HEK293 (cell line): ENCODE measurements at regions of chrX and their contacts with region 1.

Region 1: GRCh38 chrX:56978172-56978571 is 17.2 kb downstream of the SPIN3 start:
- H3K4me3 ChIP-seq: no peak overlapping the region
- H3K27ac ChIP-seq: no peak overlapping the region
- H3K4me1 ChIP-seq: no peaks in the 10 kb centered on the region
- CTCF ChIP-seq: peak; percentile 49; the same call in 1 of the 2 replicates

Region 2: GRCh38 chrX:56802921-56803849 is 175.0 kb before region 1 on chrX:
- CTCF ChIA-PET with region 1: interaction called, 10 read pairs
- POLR2A ChIA-PET with region 1: interaction called, 3 read pairs
- H3K4me3 ChIP-seq: peak overlapping the region; percentile 45
- H3K27ac ChIP-seq: peak overlapping the region; percentile 51
- H3K4me1 ChIP-seq: peaks cover 4% of the 10 kb centered on the region; the same call in 1 of the 2 replicates
- CTCF ChIP-seq: peak; percentile 32; the same call in 1 of the 2 replicates